ENCODE measurements at regions of chr7 and their contacts with region 1.

Region 1: DNA sequence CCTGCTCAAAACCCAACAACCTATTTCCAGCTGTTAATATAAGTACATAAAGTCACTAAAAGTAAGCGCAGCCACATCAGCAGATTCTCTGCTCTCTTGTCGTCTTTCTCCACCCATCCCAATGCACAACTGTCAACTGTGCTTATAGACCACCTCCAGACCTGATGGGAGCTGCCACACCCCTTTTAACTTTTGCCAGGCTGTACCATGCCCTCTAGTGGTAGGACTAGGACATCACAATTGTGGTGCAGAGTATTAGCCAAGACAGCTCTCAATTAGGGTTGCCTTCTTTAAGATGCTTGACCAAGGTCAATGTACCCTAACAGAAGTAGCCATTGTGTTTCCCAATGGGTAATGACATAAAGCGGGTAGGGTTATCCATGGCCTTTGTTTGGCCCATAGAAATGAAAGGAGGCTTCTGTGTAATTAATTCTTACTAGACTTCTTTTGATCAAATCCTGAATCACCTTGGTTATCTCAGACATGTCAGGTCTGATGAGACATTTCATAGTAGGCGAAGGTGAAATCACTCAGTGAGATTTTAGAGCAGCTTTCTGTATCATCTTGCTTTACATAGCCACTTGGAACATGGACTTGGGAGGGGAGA is 68.1 kb downstream of the SCRN1 start:
- DNase-seq: peak; percentile 11
- ATAC-seq: peak; percentile 99
- H3K4me3 ChIP-seq: no peak overlapping the region
- H3K27ac ChIP-seq: no peak overlapping the region
- H3K4me1 ChIP-seq: no peaks in the 10 kb centered on the region
- H3K27me3 ChIP-seq: no peaks in the 10 kb centered on the region
- CTCF ChIP-seq: peak; percentile 83 to 98 (median 89)
- EP300 ChIP-seq: no peak
- POLR2A ChIP-seq: no peak
- RAD21 ChIP-seq: peak; percentile 83

Region 2: GRCh38 chr7:29243910-29244655 is 677.4 kb before region 1 on chr7:
- CTCF ChIA-PET with region 1: no interaction called
- POLR2A ChIA-PET with region 1: no interaction called
- RAD21 ChIA-PET with region 1: no interaction called
- SMC1A ChIA-PET with region 1: no interaction called
- in situ Hi-C with region 1: no loop called
- intact Hi-C with region 1: no loop called
- DNase-seq: peak; percentile 7
- ATAC-seq: peak; percentile 96
- H3K4me3 ChIP-seq: no peak overlapping the region
- H3K27ac ChIP-seq: no peak overlapping the region
- H3K4me1 ChIP-seq: no peaks in the 10 kb centered on the region
- H3K27me3 ChIP-seq: no peaks in the 10 kb centered on the region; a peak in 1 of 4 replicates
- CTCF ChIP-seq: peak; percentile 26 to 52 (median 45); a peak in 5 of 6 replicates
- EP300 ChIP-seq: no peak
- POLR2A ChIP-seq: no peak
- RAD21 ChIP-seq: no peak

Region 3: DNA sequence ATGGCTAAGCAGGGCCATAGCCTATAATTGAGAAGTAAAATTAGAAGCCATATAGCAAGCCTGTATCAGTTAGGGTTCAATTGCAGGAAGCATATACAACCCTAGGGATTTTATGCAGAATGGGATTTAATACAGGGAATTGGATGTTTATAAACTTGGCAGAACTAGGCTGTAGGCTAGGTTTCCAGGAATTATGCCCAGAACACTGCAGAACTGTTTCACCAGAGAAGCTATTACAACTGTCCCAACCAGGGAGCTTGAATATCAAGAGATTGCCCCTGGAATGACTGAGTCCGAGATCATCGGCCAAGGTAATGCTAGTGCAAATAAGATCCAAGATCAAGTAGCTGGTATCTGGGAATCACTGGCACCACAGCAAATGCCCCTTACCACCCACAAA is 293.9 kb before region 1 on chr7:
- CTCF ChIA-PET with region 1: no interaction called
- POLR2A ChIA-PET with region 1: no interaction called
- RAD21 ChIA-PET with region 1: no interaction called
- SMC1A ChIA-PET with region 1: no interaction called
- in situ Hi-C with region 1: no loop called
- intact Hi-C with region 1: no loop called
- DNase-seq: no peak
- ATAC-seq: no peak
- H3K4me3 ChIP-seq: no peak overlapping the region
- H3K27ac ChIP-seq: no peak overlapping the region
- H3K4me1 ChIP-seq: no peaks in the 10 kb centered on the region
- H3K27me3 ChIP-seq: no peaks in the 10 kb centered on the region; a peak in 1 of 4 replicates
- CTCF ChIP-seq: no peak
- EP300 ChIP-seq: no peak
- POLR2A ChIP-seq: no peak
- RAD21 ChIP-seq: no peak

Region 4: DNA sequence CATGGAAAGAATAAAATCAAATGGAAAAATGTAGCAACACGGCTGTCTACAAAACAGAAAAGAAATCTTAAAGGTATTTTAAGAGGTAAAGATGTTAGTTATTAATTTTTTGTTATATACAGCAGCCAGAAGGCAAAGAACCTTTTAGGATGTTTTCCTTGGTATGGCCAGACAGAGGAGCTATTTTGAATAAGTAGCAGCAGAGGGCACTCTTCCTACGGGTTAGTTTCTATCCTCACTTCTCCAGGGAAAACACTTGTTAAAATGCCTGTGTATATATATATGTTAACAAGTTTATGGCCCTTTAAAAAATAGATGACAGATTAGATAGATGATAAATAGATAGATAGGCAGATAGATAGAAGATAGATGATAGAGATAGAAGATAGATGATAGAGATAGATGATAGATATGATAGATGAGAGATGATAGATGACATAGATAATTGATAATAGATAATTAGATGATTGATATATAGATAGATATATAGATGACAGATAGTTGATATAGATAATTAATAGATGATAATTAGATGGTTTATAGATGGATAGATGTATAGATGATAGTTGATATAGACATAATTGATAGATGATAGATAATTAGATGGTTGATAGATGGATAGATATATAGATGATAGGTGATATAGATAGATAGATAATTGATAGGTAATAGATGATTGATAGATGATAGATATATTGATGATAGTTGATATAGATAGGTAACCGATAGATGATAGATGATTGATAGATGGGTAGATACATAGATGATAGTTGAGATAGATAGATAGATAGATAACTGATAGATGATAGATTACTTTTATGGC is 173.0 kb before region 1 on chr7:
- CTCF ChIA-PET with region 1: interaction called, 21 read pairs
- POLR2A ChIA-PET with region 1: no interaction called
- RAD21 ChIA-PET with region 1: interaction called, 3 read pairs
- SMC1A ChIA-PET with region 1: interaction called, 17 read pairs
- in situ Hi-C with region 1: no loop called
- intact Hi-C with region 1: loop called (anchors 10 kb)
- DNase-seq: no peak
- ATAC-seq: 0 out of 3 replicates have a peak, but pooled peaks have one; percentile 35
- H3K4me3 ChIP-seq: no peak overlapping the region
- H3K27ac ChIP-seq: no peak overlapping the region
- H3K4me1 ChIP-seq: no peaks in the 10 kb centered on the region
- H3K27me3 ChIP-seq: peaks cover 0 to 1% of the 10 kb centered on the region in 2 experiments; a peak in 1 of 4 replicates
- CTCF ChIP-seq: peak; percentile 17 to 30 (median 24); a peak in 4 of 6 replicates
- EP300 ChIP-seq: no peak
- POLR2A ChIP-seq: no peak
- RAD21 ChIP-seq: peak; percentile 36

Region 5: DNA sequence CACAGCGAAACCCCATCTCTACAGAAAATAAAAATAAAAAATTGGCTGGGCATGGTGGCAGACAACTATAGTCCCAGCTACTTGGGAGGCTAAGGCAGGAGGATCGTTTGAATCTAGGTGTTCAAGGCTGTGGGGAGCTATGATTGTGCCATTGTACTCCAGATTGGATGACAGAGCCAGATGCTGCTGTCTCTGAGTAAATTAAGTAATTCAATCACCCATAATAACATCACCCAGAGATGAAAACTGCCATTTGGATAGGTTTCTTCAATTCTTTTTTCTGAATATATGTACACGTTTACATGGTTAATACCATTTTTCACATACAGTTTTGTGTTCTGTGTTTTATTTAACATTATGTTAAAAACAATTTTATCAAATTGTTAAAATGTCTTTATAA is 35.9 kb before region 1 on chr7:
- CTCF ChIA-PET with region 1: no interaction called
- POLR2A ChIA-PET with region 1: no interaction called
- RAD21 ChIA-PET with region 1: no interaction called
- SMC1A ChIA-PET with region 1: no interaction called
- in situ Hi-C with region 1: no loop called
- intact Hi-C with region 1: no loop called
- DNase-seq: no peak
- ATAC-seq: no peak
- H3K4me3 ChIP-seq: no peak overlapping the region
- H3K27ac ChIP-seq: no peak overlapping the region
- H3K4me1 ChIP-seq: no peaks in the 10 kb centered on the region
- H3K27me3 ChIP-seq: no peaks in the 10 kb centered on the region; a peak in 1 of 4 replicates
- CTCF ChIP-seq: no peak
- EP300 ChIP-seq: no peak
- POLR2A ChIP-seq: no peak
- RAD21 ChIP-seq: no peak

Region 6: DNA sequence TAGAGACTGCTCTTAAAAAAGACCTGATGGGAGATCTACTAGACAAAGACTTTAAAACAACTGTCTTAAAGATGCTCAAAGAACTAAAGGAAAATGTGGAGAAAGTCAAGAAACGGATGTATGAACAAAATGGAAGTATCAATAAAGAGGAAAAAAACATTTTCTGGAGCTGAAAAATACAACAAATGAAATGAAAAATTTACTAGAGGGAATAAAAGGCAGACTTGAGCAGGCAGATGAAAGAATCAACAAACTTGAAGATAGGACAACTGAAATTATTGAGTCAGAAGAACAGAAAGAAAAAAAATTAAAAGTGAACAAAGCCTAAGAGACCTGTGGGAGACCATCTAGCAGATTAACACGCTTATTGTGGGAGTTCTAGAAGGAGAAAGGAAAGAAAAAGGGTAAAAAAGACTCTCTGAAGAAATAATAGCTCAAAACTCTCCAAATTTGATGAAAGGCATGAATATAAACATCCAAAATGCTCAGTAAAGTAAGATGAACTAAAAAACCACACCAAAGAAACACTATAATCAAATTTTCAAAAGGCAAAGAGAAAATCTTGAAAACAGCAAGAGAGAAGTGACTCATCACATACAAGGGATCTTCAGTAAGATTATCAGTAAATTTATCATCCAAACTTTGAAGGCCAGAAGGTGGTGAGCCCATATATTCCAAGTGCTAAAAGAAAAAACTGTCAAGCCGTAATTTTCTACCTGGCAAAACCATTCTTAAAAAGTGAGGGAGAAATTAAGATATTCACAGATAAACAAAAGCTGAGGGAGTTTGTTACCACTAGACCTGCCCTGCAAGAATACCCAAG is 15.1 kb before region 1 on chr7:
- CTCF ChIA-PET with region 1: interaction called, 10 read pairs
- POLR2A ChIA-PET with region 1: interaction called, 3 read pairs
- RAD21 ChIA-PET with region 1: no interaction called
- SMC1A ChIA-PET with region 1: interaction called, 3 read pairs
- in situ Hi-C with region 1: no loop called
- intact Hi-C with region 1: no loop called
- DNase-seq: no peak
- ATAC-seq: no peak
- H3K4me3 ChIP-seq: no peak overlapping the region
- H3K27ac ChIP-seq: no peak overlapping the region
- H3K4me1 ChIP-seq: no peaks in the 10 kb centered on the region
- H3K27me3 ChIP-seq: no peaks in the 10 kb centered on the region
- CTCF ChIP-seq: no peak
- EP300 ChIP-seq: no peak
- POLR2A ChIP-seq: no peak
- RAD21 ChIP-seq: no peak

Region 7: GRCh38 chr7:29940199-29940598 is 18.7 kb after region 1 on chr7:
- CTCF ChIA-PET with region 1: interaction called, 20 read pairs
- POLR2A ChIA-PET with region 1: interaction called, 4 read pairs
- RAD21 ChIA-PET with region 1: no interaction called
- SMC1A ChIA-PET with region 1: interaction called, 3 read pairs
- in situ Hi-C with region 1: no loop called
- intact Hi-C with region 1: no loop called
- DNase-seq: no peak
- ATAC-seq: no peak
- H3K4me3 ChIP-seq: no peak overlapping the region
- H3K27ac ChIP-seq: no peak overlapping the region
- H3K4me1 ChIP-seq: no peaks in the 10 kb centered on the region
- H3K27me3 ChIP-seq: no peaks in the 10 kb centered on the region
- CTCF ChIP-seq: no peak
- EP300 ChIP-seq: no peak
- POLR2A ChIP-seq: no peak
- RAD21 ChIP-seq: no peak

Region 8: DNA sequence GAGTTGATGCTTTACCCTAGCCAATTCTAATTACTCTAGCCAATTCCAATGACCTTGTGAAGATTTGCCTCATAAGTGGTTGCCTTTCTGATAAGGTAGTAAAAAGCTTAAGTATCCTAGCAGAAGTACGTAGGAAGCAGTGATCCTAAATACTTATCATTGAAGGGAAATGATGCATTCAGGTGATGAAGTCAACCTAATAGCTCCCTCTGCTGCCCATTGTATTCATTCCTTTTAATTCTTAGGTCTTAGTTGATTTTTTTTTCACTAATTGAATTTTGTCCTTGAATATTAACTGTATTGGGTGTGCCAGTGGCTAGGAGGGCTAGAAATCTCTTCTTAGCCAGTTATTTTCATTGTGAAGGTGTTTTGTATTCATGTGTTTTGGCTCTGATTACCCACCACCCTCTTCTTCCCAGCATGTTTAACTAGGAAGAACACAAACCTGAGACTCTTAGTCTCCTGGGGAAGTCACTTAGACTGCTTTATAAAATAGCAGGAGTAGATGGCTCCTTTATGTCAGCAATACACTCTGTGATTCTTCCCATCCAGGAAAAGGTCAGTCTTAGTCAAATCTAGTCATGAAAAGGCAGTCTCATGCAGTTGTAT is 153.0 kb after region 1 on chr7:
- CTCF ChIA-PET with region 1: interaction called, 13 read pairs
- POLR2A ChIA-PET with region 1: no interaction called
- RAD21 ChIA-PET with region 1: interaction called, 5 read pairs
- SMC1A ChIA-PET with region 1: interaction called, 3 read pairs
- in situ Hi-C with region 1: no loop called
- intact Hi-C with region 1: no loop called
- DNase-seq: no peak
- ATAC-seq: peak; percentile 57
- H3K4me3 ChIP-seq: no peak overlapping the region
- H3K27ac ChIP-seq: no peak overlapping the region
- H3K4me1 ChIP-seq: no peaks in the 10 kb centered on the region
- H3K27me3 ChIP-seq: no peaks in the 10 kb centered on the region
- CTCF ChIP-seq: peak; percentile 41 to 55 (median 55); a peak in 3 of 6 replicates
- EP300 ChIP-seq: no peak
- POLR2A ChIP-seq: no peak
- RAD21 ChIP-seq: peak; percentile 40; the same call in 1 of the 2 replicates